ENCODE measurements at regions of chr11 and their contacts with region 1.

Region 1: GRCh38 chr11:60498853-60499252 is 6.3 kb downstream of the MS4A12 start:
- DNase-seq: no peak
- ATAC-seq: no peak
- H3K4me3 ChIP-seq: no peak overlapping the region
- H3K27ac ChIP-seq: no peak overlapping the region
- H3K4me1 ChIP-seq: no peaks in the 10 kb centered on the region
- H3K27me3 ChIP-seq: no peaks in the 10 kb centered on the region
- CTCF ChIP-seq: no peak
- POLR2A ChIP-seq: no peak

Region 2: DNA sequence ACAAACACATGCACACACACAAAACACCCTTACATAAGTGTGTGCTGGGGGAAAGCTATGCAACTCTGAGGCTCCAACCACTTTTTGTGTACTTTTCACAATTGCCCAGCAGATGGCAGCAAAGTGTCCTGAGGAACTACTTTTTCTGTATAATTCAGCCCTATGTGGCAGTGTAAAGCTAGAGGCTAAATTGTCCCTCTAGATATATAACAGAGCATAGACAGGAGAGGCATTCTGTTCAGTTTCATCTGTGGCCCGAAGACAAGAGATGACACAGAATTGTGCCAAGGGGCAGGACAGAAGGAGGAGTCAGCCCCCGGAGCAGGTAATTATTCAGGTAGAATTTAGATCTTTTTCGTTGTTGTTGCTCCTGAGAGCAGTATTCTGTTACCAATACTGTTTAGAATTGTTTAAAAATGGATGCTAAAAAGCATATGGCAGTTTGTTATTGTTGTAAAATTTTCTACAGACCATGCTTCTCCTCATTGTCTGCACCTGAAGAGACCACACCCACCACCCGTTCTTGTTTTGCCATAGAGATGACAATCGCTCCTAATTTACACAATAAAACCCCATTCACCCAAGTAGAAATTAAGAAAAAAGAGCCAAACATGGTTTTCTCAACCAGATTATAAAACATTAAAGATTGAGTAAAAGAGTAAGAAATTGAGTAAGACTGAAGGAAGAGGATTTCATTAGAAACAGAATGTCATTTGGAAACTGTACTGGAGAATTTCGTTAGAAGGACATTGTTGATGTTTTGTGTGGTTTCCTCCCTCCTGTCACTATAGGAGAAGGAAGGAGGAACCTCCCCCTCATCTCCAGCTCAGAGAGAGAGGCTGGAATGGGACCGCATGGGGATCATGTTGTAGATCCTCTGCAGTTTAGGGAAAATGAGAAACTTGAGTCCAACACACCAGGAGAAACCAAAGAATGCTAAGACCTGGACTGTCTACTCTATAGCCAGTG is 135.0 kb before region 1 on chr11:
- intact Hi-C with region 1: loop called (anchors 10 kb)
- DNase-seq: peak; percentile 73 to 76 (median 74)
- ATAC-seq: peak; percentile 85
- H3K4me3 ChIP-seq: no peak overlapping the region
- H3K27ac ChIP-seq: peak overlapping the region in 1 of 4 donors; percentile 31
- H3K4me1 ChIP-seq: no peaks in the 10 kb centered on the region
- H3K27me3 ChIP-seq: no peaks in the 10 kb centered on the region
- CTCF ChIP-seq: peak in 6 of 7 experiments; percentile 67 to 86 (median 78)
- POLR2A ChIP-seq: no peak

Region 3: DNA sequence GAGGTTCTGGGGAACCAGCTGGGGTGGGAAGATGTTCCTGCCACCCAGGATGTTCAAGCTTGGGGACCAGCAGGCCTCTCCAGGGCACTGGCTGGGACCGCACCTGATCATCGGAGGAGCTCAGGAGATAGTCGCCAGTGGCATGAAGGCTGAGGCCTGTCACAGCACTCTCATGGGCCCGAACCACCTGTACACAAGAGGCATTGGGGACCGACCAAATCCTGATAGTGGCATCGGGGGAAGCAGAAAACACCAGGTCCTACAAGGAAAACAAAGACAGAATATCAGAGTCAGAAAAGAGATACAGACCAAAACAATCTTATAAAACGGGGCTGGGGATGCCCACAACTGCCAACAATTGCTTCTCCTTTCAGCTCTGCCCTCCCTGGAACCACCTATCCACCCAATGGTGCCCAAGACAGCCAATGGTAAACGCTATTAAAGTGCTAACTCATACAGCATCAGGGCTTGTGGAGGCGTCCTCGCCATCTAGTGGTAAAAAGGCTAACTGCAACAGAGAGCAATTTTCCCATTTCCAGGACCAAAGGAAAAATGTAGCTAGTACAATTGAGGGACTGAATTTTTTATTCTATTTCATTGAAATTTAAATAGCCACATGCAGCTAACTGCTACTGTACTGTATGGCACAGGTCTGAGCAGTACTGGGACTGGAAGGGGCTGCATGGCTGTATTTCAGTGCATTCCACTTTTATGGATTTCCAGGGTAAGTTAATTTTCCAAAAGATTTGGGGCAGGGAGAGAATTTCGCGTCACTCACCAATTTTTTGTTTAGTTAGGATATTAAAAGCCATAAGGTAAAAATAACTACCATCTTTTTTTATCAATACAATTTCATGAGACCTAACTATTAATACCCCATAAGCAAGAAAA is 400.4 kb after region 1 on chr11:
- intact Hi-C with region 1: no loop called
- DNase-seq: peak; percentile 43 to 51 (median 46)
- ATAC-seq: peak; percentile 70
- H3K4me3 ChIP-seq: no peak overlapping the region
- H3K27ac ChIP-seq: no peak overlapping the region
- H3K4me1 ChIP-seq: peaks cover 14% of the 10 kb centered on the region
- H3K27me3 ChIP-seq: no peaks in the 10 kb centered on the region
- CTCF ChIP-seq: peak; percentile 84 to 97 (median 88)
- POLR2A ChIP-seq: no peak

Region 4: DNA sequence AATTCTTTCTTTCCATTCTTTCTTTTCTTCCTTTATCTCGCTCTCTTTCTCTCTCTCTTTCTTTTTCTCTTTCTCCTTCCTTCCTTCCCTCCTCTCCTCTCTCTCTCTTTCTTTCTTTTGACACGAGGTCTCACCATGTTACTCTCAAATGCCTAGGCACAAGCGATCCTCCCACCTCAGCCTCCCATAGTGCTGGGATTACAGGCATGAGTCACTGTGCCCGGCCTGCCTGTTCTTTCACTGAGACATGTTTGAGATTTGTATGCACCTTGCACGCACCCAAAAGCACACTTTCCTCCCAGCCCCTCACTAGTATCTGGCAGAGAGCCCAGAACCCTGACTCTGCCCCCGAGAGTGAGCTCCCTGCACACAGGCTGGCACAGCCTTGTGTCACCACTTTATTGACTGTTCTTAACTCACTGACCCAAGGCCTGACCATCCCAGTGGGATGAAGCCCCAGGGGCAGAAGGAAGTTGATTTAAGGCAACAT is 529.5 kb after region 1 on chr11:
- intact Hi-C with region 1: no loop called
- DNase-seq: no peak
- ATAC-seq: no peak
- H3K4me3 ChIP-seq: no peak overlapping the region
- H3K27ac ChIP-seq: no peak overlapping the region
- H3K4me1 ChIP-seq: peaks cover 15% of the 10 kb centered on the region
- H3K27me3 ChIP-seq: no peaks in the 10 kb centered on the region
- CTCF ChIP-seq: no peak
- POLR2A ChIP-seq: no peak